GM10248 (cell line): ENCODE measurements at regions of chr3 and their contacts with region 1.

Region 1: GRCh38 chr3:133953297-133953696 is 57.6 kb upstream of the RAB6B start:
- DNase-seq: no peak
- CTCF ChIP-seq: no peak

Region 2: DNA sequence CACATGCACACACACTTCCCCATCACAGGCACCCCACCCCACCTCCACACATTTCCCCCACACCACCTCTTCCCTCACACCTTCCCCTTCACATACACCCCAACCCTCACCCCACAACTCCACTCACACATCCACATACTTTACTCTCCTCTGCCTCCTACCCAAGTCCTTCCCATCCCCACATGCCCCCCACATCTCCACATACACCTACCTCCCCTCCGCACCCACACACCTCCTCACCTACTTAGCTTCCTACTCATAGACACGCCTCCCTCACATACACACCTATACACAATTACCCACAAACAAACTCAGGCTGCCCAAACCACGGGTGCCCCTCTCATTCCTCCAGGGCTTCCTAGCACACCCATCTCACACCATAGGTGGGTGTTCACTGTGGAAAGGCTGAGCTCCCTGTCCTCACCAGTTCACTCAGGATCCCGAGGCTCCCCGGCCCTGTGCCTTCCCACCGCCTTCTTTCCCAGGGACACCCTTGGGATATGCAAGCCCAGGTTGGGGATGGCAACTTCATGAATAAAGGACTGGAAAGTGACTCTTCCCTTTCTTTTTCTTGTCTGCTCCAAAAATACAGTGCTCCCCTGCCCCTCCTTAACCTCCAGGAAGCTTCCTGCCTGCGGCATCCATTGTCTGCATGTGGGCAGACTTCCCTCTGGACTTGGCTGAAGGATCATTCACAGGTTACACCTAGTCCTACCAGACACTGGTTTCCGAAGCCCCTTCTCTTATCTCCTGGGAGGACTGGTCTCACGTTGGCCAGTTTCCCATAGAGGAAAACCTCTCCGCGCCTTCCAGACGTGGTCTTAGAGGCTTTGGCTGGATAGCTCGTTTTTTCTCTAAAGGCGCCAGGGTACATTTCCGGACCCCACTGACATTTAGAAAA is 14.9 kb after region 1 on chr3:
- CTCF ChIA-PET with region 1: interaction called, 4 read pairs
- POLR2A ChIA-PET with region 1: interaction called, 10 read pairs
- DNase-seq: no peak
- CTCF ChIP-seq: no peak